MCF 10A (cell line): ENCODE measurements at regions of chr10 and their contacts with region 1.

Region 1: DNA sequence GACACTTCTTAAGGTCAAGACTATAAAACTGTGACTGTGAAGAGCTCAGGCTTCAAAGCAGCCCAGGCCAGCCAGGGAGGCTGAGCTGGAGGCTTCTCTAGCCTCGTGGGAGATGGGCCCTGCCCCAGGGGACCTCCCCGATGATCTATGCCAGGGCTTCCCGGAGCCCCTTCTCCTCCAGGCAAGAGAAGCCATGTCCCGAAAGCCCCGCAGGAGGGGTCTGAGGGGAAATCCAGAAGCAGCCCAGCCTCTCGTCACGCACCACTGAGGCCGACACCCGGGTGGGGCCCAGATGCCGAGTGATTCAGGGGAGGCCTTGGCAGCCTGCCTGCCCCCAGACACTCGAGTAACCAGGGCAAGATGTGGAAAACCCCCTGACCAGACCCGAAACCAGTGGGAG is 63.7 kb downstream of the PROSER2 start:
- DNase-seq: no peak
- H3K4me3 Mint-ChIP-seq: no peak overlapping the region
- H3K27ac Mint-ChIP-seq: peak overlapping the region; percentile 70
- H3K4me1 Mint-ChIP-seq: peaks cover 15% of the 10 kb centered on the region
- H3K27me3 Mint-ChIP-seq: no peaks in the 10 kb centered on the region
- CTCF ChIP-seq: no peak

Region 2: GRCh38 chr10:11874542-11875177 is 12.2 kb before region 1 on chr10:
- CTCF ChIA-PET with region 1: interaction called, 3 read pairs
- POLR2A ChIA-PET with region 1: interaction called, 19 read pairs
- intact Hi-C with region 1: no loop called
- DNase-seq: peak; percentile 77
- H3K4me3 Mint-ChIP-seq: no peak overlapping the region
- H3K27ac Mint-ChIP-seq: peak overlapping the region; percentile 96
- H3K4me1 Mint-ChIP-seq: peaks cover 21% of the 10 kb centered on the region
- H3K27me3 Mint-ChIP-seq: no peaks in the 10 kb centered on the region
- CTCF ChIP-seq: no peak